K562 (cell line): ENCODE measurements at regions of chr4 and their contacts with region 1.

Region 1: GRCh38 chr4:129362674-129363274 is 266.8 kb downstream of the C4orf33 start:
- DNase-seq: peak; percentile 50 to 73 (median 54)
- ATAC-seq: peak; percentile 73
- H3K4me3 ChIP-seq: no peak overlapping the region
- H3K27ac ChIP-seq: no peak overlapping the region
- H3K4me1 ChIP-seq: no peaks in the 10 kb centered on the region
- H3K27me3 ChIP-seq: no peaks in the 10 kb centered on the region
- CTCF ChIP-seq: peak; percentile 38 to 84 (median 77); a peak in 5 of 6 replicates
- EP300 ChIP-seq: no peak
- POLR2A ChIP-seq: no peak
- RAD21 ChIP-seq: peak; percentile 60 to 75

Region 2: DNA sequence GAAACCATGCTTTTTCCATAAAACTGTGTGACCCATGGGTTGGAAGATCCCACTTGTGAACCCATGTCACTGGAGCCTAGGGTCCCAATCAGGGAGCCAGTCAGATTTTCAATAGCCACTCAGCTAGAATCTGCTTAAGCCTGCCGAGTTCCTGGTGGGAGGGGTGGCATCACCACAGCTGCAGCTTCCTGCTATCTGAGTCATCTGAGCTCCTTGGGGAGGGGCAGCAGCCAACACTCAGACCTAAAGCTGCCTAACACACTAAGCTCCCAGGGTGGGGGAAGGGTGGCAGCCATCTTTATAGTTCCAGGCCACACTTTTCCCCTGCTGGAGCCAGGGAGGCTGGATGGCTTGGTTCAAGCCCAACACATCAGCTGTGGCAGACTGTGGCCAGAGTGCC is 83.3 kb after region 1 on chr4:
- CTCF ChIA-PET with region 1: no interaction called
- POLR2A ChIA-PET with region 1: no interaction called
- in situ Hi-C with region 1: no loop called
- intact Hi-C with region 1: no loop called
- DNase-seq: no peak
- ATAC-seq: no peak
- H3K4me3 ChIP-seq: no peak overlapping the region
- H3K27ac ChIP-seq: no peak overlapping the region
- H3K4me1 ChIP-seq: no peaks in the 10 kb centered on the region
- H3K27me3 ChIP-seq: no peaks in the 10 kb centered on the region
- CTCF ChIP-seq: no peak
- EP300 ChIP-seq: no peak
- POLR2A ChIP-seq: no peak
- RAD21 ChIP-seq: no peak

Region 3: GRCh38 chr4:129641179-129641578 is 278.4 kb after region 1 on chr4:
- CTCF ChIA-PET with region 1: no interaction called
- POLR2A ChIA-PET with region 1: no interaction called
- in situ Hi-C with region 1: no loop called
- intact Hi-C with region 1: loop called (anchors 10 kb)
- DNase-seq: peak in 2 of 4 experiments; percentile 11 to 30
- ATAC-seq: no peak
- H3K4me3 ChIP-seq: no peak overlapping the region
- H3K27ac ChIP-seq: no peak overlapping the region
- H3K4me1 ChIP-seq: no peaks in the 10 kb centered on the region
- H3K27me3 ChIP-seq: no peaks in the 10 kb centered on the region
- CTCF ChIP-seq: peak; percentile 17 to 47 (median 43); a peak in 5 of 6 replicates
- EP300 ChIP-seq: no peak
- POLR2A ChIP-seq: no peak
- RAD21 ChIP-seq: 0 out of 4 replicates have a peak, but pooled peaks of 1 of the 2 experiments have one; percentile 30

Region 4: DNA sequence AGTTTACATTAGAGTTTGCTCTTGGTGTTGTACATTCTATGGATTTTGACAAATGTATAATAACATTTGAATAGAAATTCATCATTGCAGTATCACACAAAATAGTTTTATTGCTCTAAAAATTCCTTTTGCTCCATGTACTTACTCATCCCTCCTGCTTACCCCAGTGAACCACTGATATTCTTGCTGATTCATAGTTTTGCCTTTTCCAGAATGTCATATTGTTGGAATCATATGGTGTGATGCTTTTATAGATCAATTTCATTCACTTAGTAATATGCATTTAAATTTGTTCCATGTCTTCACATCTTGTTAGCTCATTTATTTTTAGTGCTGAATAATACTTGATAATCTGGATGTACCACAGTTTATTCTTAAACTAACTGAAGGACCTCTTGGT is 1326.4 kb after region 1 on chr4:
- CTCF ChIA-PET with region 1: no interaction called
- POLR2A ChIA-PET with region 1: no interaction called
- in situ Hi-C with region 1: loop called (anchors 25 kb)
- intact Hi-C with region 1: no loop called
- DNase-seq: no peak
- ATAC-seq: no peak
- H3K4me3 ChIP-seq: no peak overlapping the region
- H3K27ac ChIP-seq: no peak overlapping the region
- H3K4me1 ChIP-seq: no peaks in the 10 kb centered on the region
- H3K27me3 ChIP-seq: no peaks in the 10 kb centered on the region
- CTCF ChIP-seq: no peak
- EP300 ChIP-seq: no peak
- POLR2A ChIP-seq: no peak
- RAD21 ChIP-seq: no peak